Transverse colon (tissue), 4 donors: ENCODE measurements at regions of chr22 and their contacts with region 1.

Region 1: DNA sequence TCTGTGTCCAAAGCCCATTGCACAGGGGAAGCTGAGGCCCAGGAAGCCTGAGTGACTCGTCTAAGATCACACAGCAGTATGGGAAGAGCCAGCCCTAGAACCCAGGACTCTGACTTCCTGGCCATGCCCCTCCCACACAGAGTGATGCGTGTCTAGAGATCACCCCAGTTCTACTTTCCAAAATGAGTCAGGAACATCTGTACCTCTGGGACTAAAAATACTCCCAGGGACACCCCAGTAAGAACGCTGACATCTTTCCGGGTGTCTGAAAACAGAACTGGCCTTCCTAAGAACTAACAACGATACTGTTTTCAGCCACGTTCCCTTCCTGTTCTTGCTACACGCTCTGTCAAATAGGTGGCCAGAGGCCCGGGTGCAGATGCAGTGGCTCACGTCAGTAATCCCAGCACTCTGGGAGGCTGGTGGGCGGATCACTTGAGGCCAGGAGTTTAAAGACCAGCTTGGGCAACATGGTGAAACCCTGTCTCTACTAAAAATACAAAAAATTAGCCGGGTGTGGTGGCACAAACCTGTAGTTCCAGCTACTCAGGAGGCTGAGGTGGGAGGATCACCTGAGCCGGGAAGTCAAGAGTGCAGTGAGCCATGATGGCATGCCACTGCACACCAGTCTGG is 21.7 kb upstream of the PDGFB start:
- DNase-seq: no peak
- H3K4me3 ChIP-seq: no peak overlapping the region
- H3K27ac ChIP-seq: peak overlapping the region in 3 of 4 donors; percentile 3 to 52 (median 16)
- H3K4me1 ChIP-seq: no peaks in the 10 kb centered on the region
- H3K27me3 ChIP-seq: no peaks in the 10 kb centered on the region
- CTCF ChIP-seq: no peak
- EP300 ChIP-seq: no peak
- POLR2A ChIP-seq: no peak

Region 2: DNA sequence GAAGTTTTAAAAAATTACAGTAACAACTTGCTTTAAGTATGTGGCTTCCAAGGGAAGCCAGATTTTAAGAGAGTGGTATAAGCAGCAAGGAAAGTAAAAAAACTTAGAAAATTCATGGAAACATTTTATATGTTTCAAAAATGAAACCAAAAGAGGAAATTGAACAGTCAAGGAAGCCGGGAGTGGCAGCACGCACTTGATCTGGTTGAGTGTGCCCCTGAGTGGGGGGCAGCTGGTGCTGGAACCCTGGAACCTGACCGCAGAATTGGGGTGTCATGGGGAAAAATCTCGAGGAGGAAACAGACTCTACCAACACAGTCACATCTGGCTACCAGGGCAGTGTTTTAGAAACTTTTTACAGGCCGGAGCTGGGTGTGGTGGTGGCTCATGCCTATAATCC is 1346.4 kb before region 1 on chr22:
- in situ Hi-C with region 1: no loop called
- intact Hi-C with region 1: loop called (anchors 10 kb)
- DNase-seq: no peak
- H3K4me3 ChIP-seq: no peak overlapping the region
- H3K27ac ChIP-seq: peak overlapping the region; percentile 6 to 42 (median 32)
- H3K4me1 ChIP-seq: no peaks in the 10 kb centered on the region
- H3K27me3 ChIP-seq: no peaks in the 10 kb centered on the region
- CTCF ChIP-seq: no peak
- EP300 ChIP-seq: no peak
- POLR2A ChIP-seq: no peak

Region 3: DNA sequence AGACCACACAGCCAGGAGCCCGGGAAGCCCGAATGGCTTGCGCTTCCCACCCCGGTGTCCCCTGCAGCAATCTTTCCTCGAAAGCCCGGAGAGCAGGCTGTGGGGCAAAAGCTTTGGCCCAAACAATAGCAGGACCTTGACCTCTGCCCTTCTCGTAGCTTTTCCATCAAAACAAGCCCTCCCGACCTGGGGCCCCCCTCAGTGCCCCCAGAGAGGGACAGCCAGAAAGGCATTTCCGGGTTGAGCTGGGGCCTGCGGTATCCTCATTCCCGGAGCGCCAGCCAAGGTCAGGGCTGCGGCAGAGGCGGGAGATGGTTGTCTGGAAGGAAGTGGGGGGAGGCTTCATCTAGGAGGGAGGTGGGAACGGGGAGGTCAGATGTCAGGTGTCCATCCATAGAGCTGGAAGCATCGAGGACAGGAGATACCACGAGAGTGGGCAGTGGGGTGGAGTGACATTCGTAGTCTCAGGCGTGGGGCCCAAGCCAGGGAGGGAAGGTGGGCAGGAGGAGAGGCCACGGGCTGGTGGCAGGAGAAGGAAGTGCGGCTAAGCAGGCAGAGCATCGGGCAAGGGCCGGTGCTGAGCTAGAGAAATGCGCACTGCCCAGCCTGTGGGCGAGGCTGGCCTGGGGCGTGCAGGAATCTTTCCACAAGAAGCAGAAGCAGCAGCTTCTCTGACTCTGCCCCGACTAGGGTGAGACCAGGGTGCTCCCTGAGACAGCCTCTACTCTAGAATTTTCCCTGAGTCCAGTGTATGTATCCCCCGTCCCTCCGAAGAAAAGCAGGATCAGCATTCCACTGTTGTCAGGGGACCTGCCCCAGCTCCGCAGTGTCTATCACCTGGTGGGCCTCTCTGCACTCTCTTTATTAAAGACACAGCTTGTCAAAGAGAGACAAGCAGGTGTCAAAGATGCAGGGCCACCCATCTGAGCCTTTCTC is 36.0 kb before region 1 on chr22:
- in situ Hi-C with region 1: no loop called
- intact Hi-C with region 1: no loop called
- DNase-seq: no peak
- H3K4me3 ChIP-seq: no peak overlapping the region
- H3K27ac ChIP-seq: peak overlapping the region in 2 of 4 donors; percentile 10 to 12
- H3K4me1 ChIP-seq: peaks cover 0 to 13% (median 6%) of the 10 kb centered on the region in 4 donors
- H3K27me3 ChIP-seq: peaks cover 37% of the 10 kb centered on the region
- CTCF ChIP-seq: no peak
- EP300 ChIP-seq: no peak
- POLR2A ChIP-seq: no peak

Region 4: GRCh38 chr22:39785232-39785631 is 518.7 kb after region 1 on chr22:
- in situ Hi-C with region 1: no loop called
- intact Hi-C with region 1: loop called (anchors 10 kb)
- DNase-seq: no peak
- H3K4me3 ChIP-seq: no peak overlapping the region
- H3K27ac ChIP-seq: no peak overlapping the region
- H3K4me1 ChIP-seq: peaks cover 0 to 9% (median 2%) of the 10 kb centered on the region in 4 donors
- H3K27me3 ChIP-seq: no peaks in the 10 kb centered on the region
- CTCF ChIP-seq: no peak
- EP300 ChIP-seq: no peak
- POLR2A ChIP-seq: no peak